OCI-LY7 (cell line): ENCODE measurements at regions of chr9 and their contacts with region 1.

Region 1: GRCh38 chr9:124202447-124202971 is 55.2 kb upstream of the NEK6 start:
- DNase-seq: peak; percentile 95
- H3K4me3 ChIP-seq: peak overlapping the region; percentile 35
- H3K27ac ChIP-seq: peak overlapping the region; percentile 79
- H3K4me1 ChIP-seq: peaks cover 95% of the 10 kb centered on the region
- CTCF ChIP-seq: peak; percentile 57; the same call in 1 of the 2 replicates

Region 2: GRCh38 chr9:124218438-124218982 is 16.0 kb after region 1 on chr9:
- CTCF ChIA-PET with region 1: interaction called, 5 read pairs
- POLR2A ChIA-PET with region 1: interaction called, 8 read pairs
- intact Hi-C with region 1: loop called (anchors 1 kb)
- DNase-seq: peak; percentile 88
- H3K4me3 ChIP-seq: peak overlapping the region; percentile 49
- H3K27ac ChIP-seq: peak overlapping the region; percentile 74
- H3K4me1 ChIP-seq: peaks cover 68% of the 10 kb centered on the region
- CTCF ChIP-seq: no peak